ENCODE measurements at regions of chr5 and their contacts with region 1.

Region 1: DNA sequence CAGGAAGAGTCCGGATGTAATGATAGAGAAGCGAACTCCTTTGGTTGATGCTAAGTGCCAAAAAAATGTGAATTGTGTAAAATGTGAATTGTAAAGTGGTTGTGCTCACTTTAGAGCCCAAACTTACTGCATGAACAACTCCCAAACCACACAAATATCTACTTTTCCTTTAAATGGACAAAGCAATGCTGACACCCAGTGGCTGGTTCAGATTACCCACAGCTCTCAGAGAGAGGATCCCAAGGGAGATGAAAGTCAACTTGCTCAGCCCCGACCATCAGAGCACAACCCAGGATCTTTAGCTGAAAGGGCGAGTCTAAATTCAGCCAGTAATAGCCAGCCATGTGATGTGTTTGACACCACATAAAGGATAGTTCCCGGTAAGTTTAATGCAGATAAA is 133.7 kb downstream of the NMUR2 start:
- DNase-seq: peak in 4 of 5 donors; percentile 21 to 30 (median 27)
- ATAC-seq: peak in 3 of 4 donors; percentile 72 to 80 (median 75)
- H3K4me3 ChIP-seq: no peak overlapping the region
- H3K27ac ChIP-seq: peak overlapping the region in 3 of 12 donors; percentile 0 to 35 (median 15)
- H3K4me1 ChIP-seq: peaks cover 0 to 49% (median 22%) of the 10 kb centered on the region in 12 donors
- H3K27me3 ChIP-seq: no peaks in the 10 kb centered on the region
- CTCF ChIP-seq: peak; percentile 20 to 69 (median 54)
- POLR2A ChIP-seq: no peak

Region 2: GRCh38 chr5:151659001-151659754 is 612.2 kb before region 1 on chr5:
- intact Hi-C with region 1: loop called in 4 of 10 experiments (anchors 5 to 10 kb)
- DNase-seq: peak; percentile 84 to 92 (median 87)
- ATAC-seq: peak; percentile 75 to 87 (median 86)
- H3K4me3 ChIP-seq: no peak overlapping the region
- H3K27ac ChIP-seq: peak overlapping the region in 9 of 12 donors; percentile 4 to 52 (median 28)
- H3K4me1 ChIP-seq: peaks cover 3 to 39% (median 23%) of the 10 kb centered on the region in 12 donors
- H3K27me3 ChIP-seq: no peaks in the 10 kb centered on the region
- CTCF ChIP-seq: peak; percentile 80 to 98 (median 92)
- POLR2A ChIP-seq: no peak

Region 3: GRCh38 chr5:151758430-151759241 is 512.8 kb before region 1 on chr5 and contains the start of gene ATOX1:
- intact Hi-C with region 1: loop called in 1 of 10 experiments (anchors 5 kb)
- DNase-seq: peak; percentile 93 to 97 (median 94)
- ATAC-seq: peak; percentile 99 to 100 (median 99)
- H3K4me3 ChIP-seq: peak within 1 kb of the TSS; percentile 42 to 97 (median 84)
- H3K27ac ChIP-seq: peak within 1 kb of the TSS; percentile 37 to 91 (median 86)
- H3K4me1 ChIP-seq: peaks cover 0 to 40% (median 18%) of the 10 kb centered on the region in 12 donors
- H3K27me3 ChIP-seq: no peaks in the 10 kb centered on the region
- CTCF ChIP-seq: peak in 9 of 12 donors; percentile 2 to 50 (median 16)
- POLR2A ChIP-seq: peak; percentile 60 to 96
- total RNA-seq, gene ATOX1: 52.1 to 149 (median 66.5) TPM

Region 4: DNA sequence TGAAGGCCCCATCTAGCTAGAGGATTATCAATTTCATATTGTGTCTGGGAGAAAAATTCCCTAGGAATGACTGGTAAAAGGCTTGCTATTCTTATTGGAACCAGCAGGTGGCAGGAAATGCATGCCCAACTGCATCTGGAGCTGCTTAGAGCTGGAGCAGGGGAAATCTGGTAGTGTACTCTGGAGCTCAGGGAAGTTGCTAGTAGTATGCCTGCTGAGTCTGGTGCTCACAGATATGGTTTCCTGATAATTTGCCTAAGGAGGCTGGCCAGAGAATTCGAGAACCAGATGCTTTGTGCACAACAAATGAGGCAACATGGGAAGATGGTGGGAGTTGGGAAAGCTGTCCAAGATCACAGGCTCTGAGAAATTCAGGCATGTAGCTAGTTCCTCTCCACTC is 446.0 kb before region 1 on chr5:
- intact Hi-C with region 1: loop called (anchors 1 to 5 kb)
- DNase-seq: peak in 4 of 5 donors; percentile 44 to 72 (median 56)
- ATAC-seq: peak; percentile 88 to 94 (median 90)
- H3K4me3 ChIP-seq: no peak overlapping the region
- H3K27ac ChIP-seq: no peak overlapping the region
- H3K4me1 ChIP-seq: peaks cover 0 to 17% (median 1%) of the 10 kb centered on the region in 12 donors
- H3K27me3 ChIP-seq: no peaks in the 10 kb centered on the region
- CTCF ChIP-seq: peak; percentile 74 to 93 (median 88)
- POLR2A ChIP-seq: no peak

Region 5: GRCh38 chr5:152136918-152137462 is 134.4 kb before region 1 on chr5:
- intact Hi-C with region 1: loop called in 1 of 10 experiments (anchors 5 kb)
- DNase-seq: no peak
- ATAC-seq: no peak
- H3K4me3 ChIP-seq: no peak overlapping the region
- H3K27ac ChIP-seq: no peak overlapping the region
- H3K4me1 ChIP-seq: no peaks in the 10 kb centered on the region
- H3K27me3 ChIP-seq: no peaks in the 10 kb centered on the region
- CTCF ChIP-seq: no peak
- POLR2A ChIP-seq: no peak

Region 6: GRCh38 chr5:152142840-152143469 is 128.5 kb before region 1 on chr5:
- intact Hi-C with region 1: loop called in 2 of 10 experiments (anchors 5 kb)
- DNase-seq: peak in 4 of 5 donors; percentile 25 to 48 (median 39)
- ATAC-seq: peak in 3 of 4 donors; percentile 68 to 78 (median 73)
- H3K4me3 ChIP-seq: no peak overlapping the region
- H3K27ac ChIP-seq: no peak overlapping the region
- H3K4me1 ChIP-seq: peaks cover 0 to 3% (median 0%) of the 10 kb centered on the region in 12 donors
- H3K27me3 ChIP-seq: no peaks in the 10 kb centered on the region
- CTCF ChIP-seq: peak; percentile 72 to 93 (median 84)
- POLR2A ChIP-seq: no peak

Region 7: GRCh38 chr5:152221721-152222629 is 49.4 kb before region 1 on chr5:
- intact Hi-C with region 1: loop called in 1 of 10 experiments (anchors 5 kb)
- DNase-seq: peak in 1 of 5 donors; percentile 58
- ATAC-seq: peak; percentile 76 to 94 (median 94)
- H3K4me3 ChIP-seq: no peak overlapping the region
- H3K27ac ChIP-seq: peak overlapping the region; percentile 57 to 84 (median 70)
- H3K4me1 ChIP-seq: peaks cover 0 to 23% (median 4%) of the 10 kb centered on the region in 12 donors
- H3K27me3 ChIP-seq: no peaks in the 10 kb centered on the region
- CTCF ChIP-seq: no peak
- POLR2A ChIP-seq: no peak

Measured in heart left ventricle (tissue), 16 donors.